ENCODE measurements at regions of chr2 and their contacts with region 1.

Region 1: GRCh38 chr2:64330281-64331113 is 123.5 kb upstream of the LGALSL start:
- DNase-seq: peak; percentile 89
- H3K4me3 Mint-ChIP-seq: no peak overlapping the region
- H3K27ac Mint-ChIP-seq: no peak overlapping the region
- H3K4me1 Mint-ChIP-seq: peaks cover 41% of the 10 kb centered on the region
- H3K27me3 Mint-ChIP-seq: no peaks in the 10 kb centered on the region

Region 2: DNA sequence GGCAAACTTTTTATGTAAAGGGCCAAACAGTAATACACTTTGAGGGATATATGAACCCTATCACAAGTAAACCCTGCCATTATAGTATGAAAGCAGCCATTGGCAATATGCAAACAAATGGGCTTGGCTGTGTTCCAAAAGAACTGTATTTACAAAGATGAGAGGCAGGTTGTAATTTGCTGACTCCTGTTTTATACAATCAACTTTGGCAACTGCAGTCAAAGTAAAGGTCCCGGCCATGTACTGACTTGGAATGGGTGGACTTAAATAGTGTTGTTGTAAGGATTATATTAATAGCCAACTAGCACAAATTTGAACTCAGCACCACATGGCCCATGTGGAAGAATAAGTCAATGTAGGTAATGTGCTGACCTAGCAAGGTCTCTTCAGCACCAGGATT is 965.6 kb before region 1 on chr2:
- CTCF ChIA-PET with region 1: no interaction called
- intact Hi-C with region 1: no loop called
- DNase-seq: no peak
- H3K4me3 Mint-ChIP-seq: no peak overlapping the region
- H3K27ac Mint-ChIP-seq: no peak overlapping the region
- H3K4me1 Mint-ChIP-seq: no peaks in the 10 kb centered on the region
- H3K27me3 Mint-ChIP-seq: no peaks in the 10 kb centered on the region

Region 3: GRCh38 chr2:63861220-63861822 is 469.2 kb before region 1 on chr2:
- CTCF ChIA-PET with region 1: no interaction called
- intact Hi-C with region 1: loop called (anchors 5 kb)
- DNase-seq: peak; percentile 73
- H3K4me3 Mint-ChIP-seq: no peak overlapping the region
- H3K27ac Mint-ChIP-seq: no peak overlapping the region
- H3K4me1 Mint-ChIP-seq: peaks cover 44% of the 10 kb centered on the region
- H3K27me3 Mint-ChIP-seq: no peaks in the 10 kb centered on the region

Region 4: GRCh38 chr2:64062829-64063228 is 267.7 kb before region 1 on chr2:
- CTCF ChIA-PET with region 1: interaction called, 350 read pairs
- intact Hi-C with region 1: loop called (anchors 1 kb)
- DNase-seq: peak; percentile 36
- H3K4me3 Mint-ChIP-seq: no peak overlapping the region
- H3K27ac Mint-ChIP-seq: peak overlapping the region; percentile 23
- H3K4me1 Mint-ChIP-seq: peaks cover 36% of the 10 kb centered on the region
- H3K27me3 Mint-ChIP-seq: no peaks in the 10 kb centered on the region

Region 5: GRCh38 chr2:64203858-64204632 is 126.5 kb before region 1 on chr2:
- CTCF ChIA-PET with region 1: interaction called, 24 read pairs
- intact Hi-C with region 1: loop called (anchors 1 kb)
- DNase-seq: peak; percentile 75
- H3K4me3 Mint-ChIP-seq: peak overlapping the region; percentile 65
- H3K27ac Mint-ChIP-seq: peak overlapping the region; percentile 90
- H3K4me1 Mint-ChIP-seq: peaks cover 84% of the 10 kb centered on the region
- H3K27me3 Mint-ChIP-seq: no peaks in the 10 kb centered on the region

Region 6: DNA sequence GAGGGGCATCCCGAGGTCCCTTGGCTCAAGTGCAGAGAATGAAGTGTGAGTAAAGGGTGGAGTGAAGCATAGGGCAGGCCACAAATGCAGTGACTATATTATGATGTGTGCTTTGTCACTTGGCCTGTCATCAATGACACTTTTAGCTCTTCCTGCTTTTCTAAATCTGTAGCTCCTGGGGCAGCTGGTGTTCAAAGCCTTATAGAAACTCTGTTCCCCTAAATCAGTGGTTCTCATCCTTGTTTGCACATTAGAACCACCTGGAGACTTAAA is 12.1 kb before region 1 on chr2:
- CTCF ChIA-PET with region 1: interaction called, 11 read pairs
- intact Hi-C with region 1: no loop called
- DNase-seq: no peak
- H3K4me3 Mint-ChIP-seq: no peak overlapping the region
- H3K27ac Mint-ChIP-seq: no peak overlapping the region
- H3K4me1 Mint-ChIP-seq: peaks cover 4% of the 10 kb centered on the region
- H3K27me3 Mint-ChIP-seq: no peaks in the 10 kb centered on the region

Region 7: GRCh38 chr2:64523666-64524603 is 193.4 kb after region 1 on chr2 and contains the start of gene AFTPH:
- CTCF ChIA-PET with region 1: interaction called, 24 read pairs
- intact Hi-C with region 1: loop called (anchors 1 kb)
- DNase-seq: peak; percentile 99
- H3K4me3 Mint-ChIP-seq: peak within 1 kb of the TSS; percentile 99
- H3K27ac Mint-ChIP-seq: peak within 1 kb of the TSS; percentile 100
- H3K4me1 Mint-ChIP-seq: peaks cover 26% of the 10 kb centered on the region
- H3K27me3 Mint-ChIP-seq: no peaks in the 10 kb centered on the region
- total RNA-seq, gene AFTPH: 25.3 to 27.3 TPM

Region 8: GRCh38 chr2:64873472-64873924 is 543.0 kb after region 1 on chr2:
- CTCF ChIA-PET with region 1: interaction called, 4 read pairs
- intact Hi-C with region 1: loop called (anchors 1 kb)
- DNase-seq: peak; percentile 86
- H3K4me3 Mint-ChIP-seq: peak overlapping the region; percentile 19
- H3K27ac Mint-ChIP-seq: no peak overlapping the region
- H3K4me1 Mint-ChIP-seq: peaks cover 2% of the 10 kb centered on the region
- H3K27me3 Mint-ChIP-seq: no peaks in the 10 kb centered on the region